Activated B cell treated with CpG ODN at 0.5 μM for 24 hours (primary cell): ENCODE measurements at regions of chr6 and their contacts with region 1.

Region 1: GRCh38 chr6:167047554-167047953 is 48.4 kb downstream of the CEP43 start:
- DNase-seq: peak; percentile 36
- ATAC-seq: peak; percentile 85
- H3K4me3 Mint-ChIP-seq: peak overlapping the region; percentile 76
- H3K27ac Mint-ChIP-seq: peak overlapping the region; percentile 96
- H3K4me1 Mint-ChIP-seq: peaks cover 68% of the 10 kb centered on the region
- H3K27me3 Mint-ChIP-seq: no peaks in the 10 kb centered on the region
- CTCF ChIP-seq: no peak

Region 2: GRCh38 chr6:166202321-166202733 is 845.2 kb before region 1 on chr6:
- CTCF ChIA-PET with region 1: no interaction called
- POLR2A ChIA-PET with region 1: interaction called, 10 read pairs
- intact Hi-C with region 1: no loop called
- DNase-seq: peak; percentile 42
- ATAC-seq: peak; percentile 84
- H3K4me3 Mint-ChIP-seq: peak overlapping the region; percentile 68
- H3K27ac Mint-ChIP-seq: peak overlapping the region; percentile 85
- H3K4me1 Mint-ChIP-seq: peaks cover 49% of the 10 kb centered on the region
- H3K27me3 Mint-ChIP-seq: no peaks in the 10 kb centered on the region
- CTCF ChIP-seq: no peak

Region 3: DNA sequence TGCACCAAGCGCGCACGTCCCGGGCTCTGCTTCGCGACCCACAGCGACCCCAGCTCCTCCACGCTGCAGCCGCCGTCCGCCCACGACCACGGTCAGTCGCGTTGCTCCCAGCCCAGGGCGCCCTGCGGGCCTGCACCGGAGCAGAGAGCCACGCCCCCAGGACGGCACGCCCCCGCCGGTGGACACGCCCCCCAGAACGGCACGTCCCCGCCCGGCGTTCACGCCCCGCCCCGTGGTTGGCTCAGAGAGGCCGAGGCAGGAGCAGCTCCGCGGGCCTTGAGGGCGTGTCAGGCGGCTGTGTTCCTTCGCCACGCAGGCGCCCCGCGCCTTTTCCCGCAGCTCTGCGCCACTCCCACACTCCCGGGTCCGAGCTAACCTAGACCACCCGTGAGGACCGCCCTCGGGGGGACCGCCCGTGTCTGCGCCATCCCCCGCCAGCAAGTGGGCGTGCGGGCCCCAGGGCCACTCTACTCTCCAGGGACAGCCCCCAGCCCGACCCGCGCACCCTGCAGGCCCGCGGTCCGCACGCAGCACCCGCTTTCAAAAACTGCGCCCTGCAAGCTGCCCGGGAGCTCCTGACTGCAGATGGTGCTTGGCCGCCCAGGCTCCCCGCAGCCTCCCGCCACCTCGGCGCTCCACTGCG is 91.0 kb before region 1 on chr6 and contains the start of gene RNASET2:
- CTCF ChIA-PET with region 1: interaction called, 3 read pairs
- POLR2A ChIA-PET with region 1: interaction called, 6 read pairs
- intact Hi-C with region 1: loop called (anchors 2 kb)
- DNase-seq: peak; percentile 100
- ATAC-seq: peak; percentile 82
- H3K4me3 Mint-ChIP-seq: peak within 1 kb of the TSS; percentile 91
- H3K27ac Mint-ChIP-seq: peak within 1 kb of the TSS; percentile 100
- H3K4me1 Mint-ChIP-seq: peaks cover 76% of the 10 kb centered on the region
- H3K27me3 Mint-ChIP-seq: no peaks in the 10 kb centered on the region
- CTCF ChIP-seq: no peak
- total RNA-seq, gene RNASET2: 118 and 135 TPM in 2 replicates

Region 4: DNA sequence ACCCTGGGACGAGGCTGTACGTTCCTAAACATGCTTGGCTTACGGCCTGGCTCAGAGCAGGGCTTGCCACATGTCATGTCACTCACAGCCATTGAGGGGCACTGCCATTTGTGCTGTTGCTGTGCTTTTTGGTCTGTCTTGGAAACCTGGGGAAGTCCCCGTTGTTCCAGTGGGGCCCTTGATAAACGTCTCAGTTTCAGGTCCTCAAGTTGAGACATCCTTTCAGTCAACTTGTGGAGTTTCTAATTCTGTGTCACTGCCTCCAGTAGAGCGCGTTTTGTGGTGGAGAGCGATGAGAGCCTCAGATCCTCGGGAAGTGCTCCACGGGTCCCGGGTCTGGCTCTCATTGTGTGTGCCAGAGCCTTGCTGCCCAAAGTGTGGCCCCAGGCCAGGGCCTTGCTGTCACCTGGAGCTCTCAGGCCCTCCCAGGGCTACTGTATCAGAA is 32.3 kb after region 1 on chr6:
- CTCF ChIA-PET with region 1: interaction called, 4 read pairs
- POLR2A ChIA-PET with region 1: no interaction called
- intact Hi-C with region 1: loop called (anchors 1 kb)
- DNase-seq: peak; percentile 65
- ATAC-seq: peak; percentile 99
- H3K4me3 Mint-ChIP-seq: peak overlapping the region; percentile 54
- H3K27ac Mint-ChIP-seq: peak overlapping the region; percentile 91
- H3K4me1 Mint-ChIP-seq: peaks cover 52% of the 10 kb centered on the region
- H3K27me3 Mint-ChIP-seq: no peaks in the 10 kb centered on the region
- CTCF ChIP-seq: peak; percentile 51

Region 5: GRCh38 chr6:167103041-167103891 is 55.7 kb after region 1 on chr6:
- CTCF ChIA-PET with region 1: no interaction called
- POLR2A ChIA-PET with region 1: interaction called, 10 read pairs
- intact Hi-C with region 1: no loop called
- DNase-seq: no peak
- ATAC-seq: peak; percentile 67
- H3K4me3 Mint-ChIP-seq: peak overlapping the region; percentile 58
- H3K27ac Mint-ChIP-seq: peak overlapping the region; percentile 98
- H3K4me1 Mint-ChIP-seq: peaks cover 96% of the 10 kb centered on the region
- H3K27me3 Mint-ChIP-seq: no peaks in the 10 kb centered on the region
- CTCF ChIP-seq: no peak

Region 6: GRCh38 chr6:167130008-167130677 is 82.6 kb after region 1 on chr6:
- CTCF ChIA-PET with region 1: interaction called, 3 read pairs
- POLR2A ChIA-PET with region 1: interaction called, 12 read pairs
- intact Hi-C with region 1: loop called (anchors 2 kb)
- DNase-seq: no peak
- ATAC-seq: peak; percentile 18
- H3K4me3 Mint-ChIP-seq: peak overlapping the region; percentile 55
- H3K27ac Mint-ChIP-seq: peak overlapping the region; percentile 95
- H3K4me1 Mint-ChIP-seq: peaks cover 91% of the 10 kb centered on the region
- H3K27me3 Mint-ChIP-seq: no peaks in the 10 kb centered on the region
- CTCF ChIP-seq: no peak